Heart right ventricle (tissue), 16 donors: ENCODE measurements at regions of chr17 and their contacts with region 1.

Region 1: DNA sequence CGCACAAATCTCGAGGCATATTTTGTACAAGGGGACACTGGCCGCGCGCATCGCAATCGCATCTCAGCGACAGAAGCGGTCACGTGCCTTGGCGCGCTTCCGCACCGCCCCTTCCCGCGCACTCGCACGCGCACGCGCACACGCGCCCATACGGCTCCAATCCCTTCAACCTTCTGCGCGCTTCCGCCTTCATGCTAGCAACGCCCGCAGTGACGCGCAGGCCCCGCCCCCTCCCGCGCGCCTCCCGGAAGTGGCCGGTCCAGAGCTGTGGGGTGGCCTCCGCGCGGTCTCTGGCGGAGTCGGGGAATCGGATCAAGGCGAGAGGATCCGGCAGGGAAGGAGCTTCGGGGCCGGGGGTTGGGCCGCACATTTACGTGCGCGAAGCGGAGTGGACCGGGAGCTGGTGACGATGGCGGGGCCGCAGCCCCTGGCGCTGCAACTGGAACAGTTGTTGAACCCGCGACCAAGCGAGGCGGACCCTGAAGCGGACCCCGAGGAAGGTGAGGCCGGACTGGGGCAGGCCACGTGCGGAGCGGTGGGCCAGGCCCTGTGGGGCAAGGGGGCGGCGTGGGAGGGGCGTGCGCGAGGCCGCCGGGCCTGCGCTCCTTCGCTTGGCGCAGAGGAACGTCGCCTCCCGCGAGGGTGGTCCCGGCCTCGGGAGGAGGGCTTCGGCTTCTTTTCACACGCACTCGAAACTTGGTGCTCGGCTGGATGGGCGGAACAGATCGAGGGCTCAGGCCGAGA is at the start of gene AATF:
- DNase-seq: peak; percentile 96 to 97
- ATAC-seq: peak; percentile 100
- H3K4me3 ChIP-seq: peak within 1 kb of the TSS; percentile 53 to 94 (median 88)
- H3K27ac ChIP-seq: peak within 1 kb of the TSS; percentile 1 to 92 (median 88)
- H3K4me1 ChIP-seq: peaks cover 3 to 35% (median 18%) of the 10 kb centered on the region in 9 donors
- H3K27me3 ChIP-seq: peaks cover 13 to 42% (median 39%) of the 10 kb centered on the region in 7 donors
- CTCF ChIP-seq: no peak
- total RNA-seq, gene AATF: 19.9 to 31.9 (median 26.0) TPM

Region 2: GRCh38 chr17:36601303-36602029 is 347.4 kb before region 1 on chr17 and contains the start of gene MRM1:
- intact Hi-C with region 1: loop called in 1 of 10 experiments (anchors 5 kb)
- DNase-seq: peak; percentile 94 to 95
- ATAC-seq: peak; percentile 94 to 98 (median 96)
- H3K4me3 ChIP-seq: peak within 1 kb of the TSS; percentile 67 to 98 (median 90)
- H3K27ac ChIP-seq: peak within 1 kb of the TSS; percentile 60 to 90 (median 84)
- H3K4me1 ChIP-seq: peaks cover 0 to 26% (median 19%) of the 10 kb centered on the region in 9 donors
- H3K27me3 ChIP-seq: no peaks in the 10 kb centered on the region
- CTCF ChIP-seq: peak in 3 of 9 donors; percentile 5 to 45 (median 41)
- total RNA-seq, gene MRM1: 5.5 to 8.8 (median 6.8) TPM

Region 3: DNA sequence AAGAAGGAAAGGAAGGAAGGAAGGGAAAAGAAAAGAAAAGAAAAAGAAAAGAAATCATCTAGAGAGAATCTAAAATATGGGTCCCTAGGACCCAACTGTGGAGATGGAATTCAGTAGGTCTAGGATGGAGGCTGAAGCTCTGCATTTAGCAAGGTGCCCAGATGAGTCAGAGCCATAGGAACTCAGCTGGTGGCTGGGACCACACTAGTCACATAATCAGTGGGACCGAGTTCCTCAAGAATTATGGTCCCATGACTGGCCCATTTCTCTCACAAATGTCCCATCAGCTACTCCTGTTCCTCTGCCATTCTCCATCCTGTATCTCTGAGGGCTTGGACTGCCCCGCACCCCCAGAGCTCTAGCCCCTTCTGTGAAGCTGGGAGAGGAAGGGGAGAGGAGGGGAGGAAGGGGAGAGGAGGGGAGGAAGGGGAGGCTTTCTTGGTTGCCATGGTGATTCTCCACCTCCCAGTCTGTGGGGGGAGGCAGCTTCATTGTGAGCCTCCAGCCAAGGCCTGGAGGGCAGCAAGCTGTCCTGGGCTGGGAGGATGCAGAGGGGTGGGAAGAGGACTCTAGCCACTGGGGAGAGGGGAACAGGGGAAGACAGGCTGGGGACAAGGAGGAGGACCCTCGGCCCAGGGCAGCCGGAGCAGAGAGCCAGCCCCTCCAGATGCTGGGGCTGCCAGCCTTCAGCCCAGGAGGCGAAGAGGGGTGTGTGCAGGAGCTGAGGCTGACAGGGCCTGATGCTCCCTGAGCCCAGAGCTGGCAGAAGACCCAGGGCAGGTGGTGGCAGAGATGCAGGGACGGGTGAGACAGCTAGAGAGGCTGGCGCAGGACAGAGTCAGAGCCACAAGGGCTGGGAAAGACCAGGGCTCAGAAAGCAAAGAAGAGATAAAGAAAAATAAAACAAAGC is 49.4 kb before region 1 on chr17:
- intact Hi-C with region 1: loop called in 1 of 10 experiments (anchors 10 kb)
- DNase-seq: no peak
- ATAC-seq: no peak
- H3K4me3 ChIP-seq: no peak overlapping the region
- H3K27ac ChIP-seq: no peak overlapping the region
- H3K4me1 ChIP-seq: no peaks in the 10 kb centered on the region
- H3K27me3 ChIP-seq: peaks cover 0 to 59% (median 44%) of the 10 kb centered on the region in 7 donors
- CTCF ChIP-seq: no peak

Region 4: GRCh38 chr17:37147301-37147812 is 198.5 kb after region 1 on chr17:
- intact Hi-C with region 1: no loop called
- DNase-seq: no peak
- ATAC-seq: no peak
- H3K4me3 ChIP-seq: no peak overlapping the region
- H3K27ac ChIP-seq: no peak overlapping the region
- H3K4me1 ChIP-seq: no peaks in the 10 kb centered on the region
- H3K27me3 ChIP-seq: no peaks in the 10 kb centered on the region
- CTCF ChIP-seq: no peak